Activated T-helper 2 cell treated with anti-CD3 and anti-CD28 coated beads, Interferon-gamma antibody, Interleukin-2, Interleukin-4, amounts not matched to agents 10 μg/mL and 5 μg/mL and 100 μg/mL, durations not matched to agents 14 hours and 24 hours and 36 hours (primary cell): ENCODE measurements at regions of chr11 and their contacts with region 1.

Region 1: DNA sequence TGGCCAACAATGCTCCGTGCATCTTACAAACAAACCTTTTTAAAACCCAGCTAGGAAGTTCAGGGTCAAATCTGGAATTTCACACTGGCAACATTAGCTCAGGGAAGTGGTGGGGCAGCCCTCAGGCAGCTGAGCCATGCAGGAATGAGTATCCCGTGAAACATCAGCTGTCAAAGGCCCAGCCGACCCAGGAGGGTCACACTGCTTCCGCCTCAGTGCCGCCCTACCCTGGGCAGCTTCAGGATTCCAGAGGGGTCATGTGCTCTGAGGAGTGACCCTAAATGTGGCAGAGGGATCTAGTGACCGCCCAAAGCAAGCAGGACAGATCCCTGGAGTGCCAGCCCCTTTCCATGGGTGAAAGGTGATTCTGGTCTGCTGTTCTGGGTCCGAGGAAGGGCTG is 73.4 kb downstream of the LINC01488 start:
- DNase-seq: no peak
- H3K4me3 Mint-ChIP-seq: no peak overlapping the region
- H3K27ac Mint-ChIP-seq: no peak overlapping the region
- H3K4me1 Mint-ChIP-seq: peaks cover 16% of the 10 kb centered on the region
- H3K27me3 Mint-ChIP-seq: peaks cover 8% of the 10 kb centered on the region

Region 2: DNA sequence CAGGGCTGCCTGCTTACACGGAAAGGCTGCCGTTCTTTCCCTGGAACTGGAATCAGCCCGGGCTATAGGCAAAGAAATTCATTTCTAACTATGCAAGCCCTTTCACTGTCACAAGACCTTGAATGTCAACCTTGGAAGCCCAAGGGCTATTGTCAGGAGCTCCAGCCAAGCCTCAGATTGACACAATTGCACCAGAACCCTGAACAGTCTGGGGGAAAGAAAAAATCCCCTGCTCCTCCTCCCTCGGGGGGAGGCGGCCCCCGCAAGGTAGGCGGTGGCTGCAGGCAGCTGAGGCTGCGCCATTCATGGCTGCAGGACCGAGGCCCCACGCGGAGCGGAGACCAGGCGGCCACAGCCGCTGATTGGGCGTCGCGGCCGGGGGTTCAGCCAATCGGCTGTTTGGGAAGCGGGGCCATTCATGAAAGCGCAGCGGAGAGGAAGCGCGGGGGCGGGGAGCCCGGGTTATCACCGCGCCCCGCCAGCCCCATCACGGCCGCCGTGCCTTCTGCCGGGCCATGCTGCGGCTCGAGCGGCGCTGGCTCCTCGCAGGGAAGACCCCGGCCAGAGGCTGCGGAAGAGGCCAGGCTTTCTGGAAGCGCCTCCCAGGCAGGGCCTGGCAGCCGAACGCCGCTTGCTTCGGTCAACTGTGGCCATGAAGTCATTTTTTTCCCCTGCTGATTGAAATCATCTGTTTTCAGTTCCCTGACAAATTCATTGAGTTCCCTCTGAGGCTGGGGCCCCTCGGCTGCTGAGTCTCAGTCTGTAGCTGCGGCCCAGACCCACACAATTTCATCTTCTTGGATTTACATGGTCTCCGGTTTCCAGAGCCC is 111.5 kb before region 1 on chr11:
- intact Hi-C with region 1: loop called (anchors 5 kb)
- DNase-seq: peak; percentile 71
- H3K4me3 Mint-ChIP-seq: peak overlapping the region; percentile 59
- H3K27ac Mint-ChIP-seq: peak overlapping the region; percentile 78
- H3K4me1 Mint-ChIP-seq: peaks cover 17% of the 10 kb centered on the region
- H3K27me3 Mint-ChIP-seq: peaks cover 11% of the 10 kb centered on the region

Region 3: DNA sequence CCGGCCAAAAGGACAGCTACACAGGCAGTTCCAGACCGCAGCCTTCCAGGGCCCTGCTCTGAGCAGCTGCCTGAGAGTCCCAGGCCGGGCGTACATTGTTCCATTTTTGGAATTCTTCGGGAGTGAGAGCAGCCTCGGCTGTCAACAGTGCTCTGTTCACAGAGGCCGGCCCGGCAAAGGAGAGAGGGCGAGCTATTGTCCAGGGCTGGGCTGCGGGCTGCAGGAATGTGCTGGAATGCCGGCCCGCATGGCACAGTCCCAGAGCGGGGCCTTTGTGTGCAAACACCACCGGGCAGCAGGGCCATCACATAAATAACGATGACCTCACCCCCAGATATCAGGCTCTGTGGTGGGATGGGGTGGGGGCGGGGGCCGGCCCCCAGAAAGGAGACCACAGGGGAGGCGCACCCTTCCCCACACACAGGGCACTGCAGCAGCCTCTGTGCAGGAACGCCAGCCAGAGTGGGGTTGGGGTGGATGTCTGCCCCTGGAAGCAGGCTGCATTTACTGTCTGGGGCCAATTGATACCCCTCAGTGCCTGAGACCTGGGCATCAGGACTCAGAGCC is 57.6 kb before region 1 on chr11:
- intact Hi-C with region 1: loop called (anchors 10 kb)
- DNase-seq: no peak
- H3K4me3 Mint-ChIP-seq: no peak overlapping the region
- H3K27ac Mint-ChIP-seq: no peak overlapping the region
- H3K4me1 Mint-ChIP-seq: no peaks in the 10 kb centered on the region
- H3K27me3 Mint-ChIP-seq: no peaks in the 10 kb centered on the region

Region 4: GRCh38 chr11:69620683-69621290 is 65.9 kb after region 1 on chr11:
- intact Hi-C with region 1: no loop called
- DNase-seq: no peak
- H3K4me3 Mint-ChIP-seq: no peak overlapping the region
- H3K27ac Mint-ChIP-seq: no peak overlapping the region
- H3K4me1 Mint-ChIP-seq: no peaks in the 10 kb centered on the region
- H3K27me3 Mint-ChIP-seq: peaks cover 14% of the 10 kb centered on the region

Region 5: DNA sequence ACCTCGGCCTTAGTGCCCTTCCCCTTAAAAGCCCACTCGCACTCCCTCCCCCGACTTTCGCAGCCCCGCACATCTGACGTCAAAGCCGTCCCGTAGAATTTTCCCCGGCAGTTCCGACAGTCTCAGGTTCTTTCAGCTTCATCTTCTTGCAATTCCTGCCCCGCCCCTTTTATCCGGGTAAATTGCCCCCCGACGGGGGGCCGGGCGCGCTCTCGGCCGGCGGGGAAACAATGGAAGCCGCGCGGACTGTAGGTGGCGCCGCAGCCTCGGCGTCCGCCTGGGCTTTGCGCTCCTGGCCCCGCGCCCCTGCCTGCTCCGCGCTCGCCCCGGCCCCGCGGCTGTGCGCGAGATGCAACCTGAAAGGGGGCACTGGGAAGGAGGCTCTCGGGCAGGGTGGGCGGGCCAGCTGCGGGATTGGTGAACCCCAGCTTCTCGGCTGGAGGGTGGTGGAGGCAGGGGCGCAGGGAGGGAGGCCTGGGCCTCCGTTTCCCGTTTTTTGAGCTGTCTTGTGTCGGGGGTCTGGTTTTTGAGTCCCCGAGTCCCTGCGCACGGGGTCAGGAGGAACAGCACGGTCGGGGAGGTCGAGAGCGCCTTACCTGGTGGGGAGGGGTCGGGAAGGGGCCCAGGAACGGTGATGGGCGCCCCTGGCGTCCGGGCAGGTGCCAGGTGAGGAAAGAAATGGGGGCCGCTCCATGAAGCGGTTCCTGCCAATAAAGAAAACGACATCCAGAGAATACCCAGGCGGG is 149.8 kb after region 1 on chr11:
- intact Hi-C with region 1: no loop called
- DNase-seq: no peak
- H3K4me3 Mint-ChIP-seq: no peak overlapping the region
- H3K27ac Mint-ChIP-seq: no peak overlapping the region
- H3K4me1 Mint-ChIP-seq: peaks cover 5% of the 10 kb centered on the region
- H3K27me3 Mint-ChIP-seq: peaks cover 62% of the 10 kb centered on the region